Cardiac septum (tissue), 1 donor: ENCODE measurements at regions of chr19 and their contacts with region 1.

Region 1: GRCh38 chr19:45798995-45799517 is 6.4 kb upstream of the DMWD start:
- DNase-seq: no peak

Region 2: DNA sequence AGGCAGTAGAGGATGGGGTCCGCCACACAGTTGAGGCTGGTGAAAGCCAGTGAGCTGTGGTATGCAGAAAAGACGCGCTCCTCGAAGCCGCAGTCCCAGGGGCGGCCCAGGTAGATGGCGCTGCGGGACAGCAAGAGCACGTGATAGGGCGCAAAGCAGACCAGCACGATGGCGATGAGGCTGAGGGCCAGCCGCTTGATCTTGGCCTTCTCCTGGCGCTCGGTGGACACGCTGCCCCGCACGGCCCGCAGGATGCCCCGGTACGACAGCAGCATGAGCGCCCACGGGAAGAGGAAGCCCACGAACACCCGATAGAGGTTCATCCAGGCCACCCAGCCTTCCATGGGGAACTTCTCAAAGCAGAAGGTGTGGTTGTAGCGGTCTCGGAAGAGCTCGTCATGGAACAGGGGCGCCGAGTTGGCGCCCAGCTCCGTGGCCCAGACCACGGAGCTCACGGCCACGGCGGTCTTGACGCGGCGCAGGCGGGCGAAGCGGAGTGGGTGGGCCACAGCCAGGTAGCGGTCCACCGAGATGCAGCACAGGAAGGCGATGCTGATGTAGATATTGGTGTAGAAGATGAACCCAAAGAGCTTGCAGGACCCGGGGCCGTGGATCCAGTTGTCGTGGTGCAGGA is 207.9 kb before region 1 on chr19:
- intact Hi-C with region 1: no loop called
- DNase-seq: no peak

Region 3: GRCh38 chr19:45764945-45765701 is 33.9 kb before region 1 on chr19:
- intact Hi-C with region 1: loop called (anchors 1 kb)
- DNase-seq: no peak

Region 4: GRCh38 chr19:46107371-46107770 is 308.3 kb after region 1 on chr19:
- intact Hi-C with region 1: no loop called
- DNase-seq: no peak